ENCODE measurements at regions of chr17 and their contacts with region 1.

Region 1: DNA sequence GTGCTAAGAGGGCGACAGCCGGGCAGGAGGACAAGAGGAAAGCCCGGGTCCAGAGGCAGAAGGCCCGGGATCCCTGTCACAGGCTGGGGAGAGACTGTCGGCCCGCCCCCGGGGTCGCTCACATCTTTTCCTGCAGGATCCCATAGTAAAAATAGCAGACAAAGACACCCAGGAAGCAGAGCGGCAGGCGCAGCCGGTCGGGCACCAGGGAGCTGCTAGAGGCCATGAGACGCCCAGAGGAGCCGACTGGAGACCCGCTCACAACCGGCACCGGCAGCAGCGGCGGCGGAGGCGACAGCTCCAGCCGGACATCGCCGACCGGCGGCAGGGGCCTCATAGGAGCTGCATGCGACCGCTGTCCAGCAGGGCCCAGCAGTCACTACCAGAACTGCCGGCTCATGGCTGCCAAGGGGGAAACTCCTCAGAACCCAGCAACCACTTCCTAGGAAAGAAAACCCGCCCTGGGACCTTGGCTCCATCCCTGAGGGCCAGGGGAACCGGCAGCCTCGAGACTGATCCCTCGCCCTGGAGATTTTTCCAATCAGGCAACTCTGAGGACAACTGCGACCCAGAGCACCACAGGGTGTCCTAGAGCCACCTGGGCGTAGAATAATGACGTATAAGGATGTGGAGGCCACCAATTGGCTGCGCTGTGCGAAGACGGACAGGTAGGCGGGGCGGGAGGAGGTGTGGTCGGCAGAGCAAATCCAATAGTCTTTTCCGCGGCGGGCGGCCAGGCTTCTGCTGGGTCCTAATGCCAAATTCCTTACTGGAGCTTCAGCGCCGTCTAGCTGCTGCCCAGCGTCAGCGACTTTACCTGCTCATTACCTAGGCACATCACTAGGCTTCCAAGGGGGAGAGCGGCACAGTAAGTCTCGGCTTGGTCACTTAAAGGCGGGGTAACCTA is at the start of gene SLC35B1:
- DNase-seq: peak; percentile 99
- H3K4me3 ChIP-seq: peak within 1 kb of the TSS; percentile 96
- H3K27ac ChIP-seq: peak within 1 kb of the TSS; percentile 53
- H3K4me1 ChIP-seq: peaks cover 19% of the 10 kb centered on the region
- CTCF ChIP-seq: peak; percentile 97
- total RNA-seq, gene SLC35B1: 38.1 and 51.2 TPM in 2 replicates

Region 2: DNA sequence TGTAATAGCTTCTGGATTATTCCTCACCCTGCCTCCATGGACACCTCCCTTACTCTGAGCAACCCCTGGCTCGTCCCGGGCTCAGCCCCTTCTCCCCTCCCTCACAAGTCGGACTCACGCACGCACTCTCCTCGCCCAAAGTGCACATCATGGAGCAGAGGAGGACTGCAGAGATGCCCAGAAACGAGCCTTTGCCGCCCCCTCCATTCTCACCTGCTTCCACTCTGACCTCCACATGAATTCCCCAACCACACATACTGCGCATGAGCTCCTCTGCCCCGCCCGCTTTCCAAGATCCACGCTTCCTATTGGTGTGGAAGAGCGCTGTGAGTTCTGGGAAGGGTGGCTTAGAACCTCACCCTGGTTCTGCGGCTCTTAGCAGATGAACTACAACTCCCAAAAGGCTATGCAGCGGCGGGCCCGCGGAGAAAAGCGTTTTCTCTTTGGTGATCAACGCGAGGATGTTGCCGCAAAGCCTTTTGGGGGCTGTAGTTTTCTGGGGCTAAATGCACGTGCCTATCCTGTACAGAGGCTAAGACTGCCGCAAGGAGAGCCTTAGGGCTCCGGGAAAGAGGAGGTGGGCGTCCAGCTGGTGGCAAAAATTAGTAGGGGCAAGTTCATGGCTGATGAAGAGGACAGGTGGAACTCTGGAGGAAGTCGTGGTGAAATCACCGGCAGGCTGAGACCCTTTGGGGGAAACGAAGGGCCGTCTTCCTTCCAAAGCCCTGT is 293.1 kb before region 1 on chr17 and contains the start of gene PHB1:
- CTCF ChIA-PET with region 1: no interaction called
- POLR2A ChIA-PET with region 1: no interaction called
- intact Hi-C with region 1: loop called (anchors 10 kb)
- DNase-seq: peak; percentile 98
- H3K4me3 ChIP-seq: peak within 1 kb of the TSS; percentile 96
- H3K27ac ChIP-seq: no peak within 1 kb of the TSS
- H3K4me1 ChIP-seq: peaks cover 16% of the 10 kb centered on the region
- CTCF ChIP-seq: no peak
- total RNA-seq, gene PHB1: 131 and 137 TPM in 2 replicates

Region 3: GRCh38 chr17:49748791-49749190 is 40.9 kb after region 1 on chr17:
- CTCF ChIA-PET with region 1: interaction called, 3 read pairs
- POLR2A ChIA-PET with region 1: interaction called, 11 read pairs
- intact Hi-C with region 1: loop called (anchors 1 kb)
- DNase-seq: peak; percentile 90
- H3K4me3 ChIP-seq: peak overlapping the region; percentile 67
- H3K27ac ChIP-seq: peak overlapping the region; percentile 94
- H3K4me1 ChIP-seq: peaks cover 93% of the 10 kb centered on the region
- CTCF ChIP-seq: no peak

Region 4: DNA sequence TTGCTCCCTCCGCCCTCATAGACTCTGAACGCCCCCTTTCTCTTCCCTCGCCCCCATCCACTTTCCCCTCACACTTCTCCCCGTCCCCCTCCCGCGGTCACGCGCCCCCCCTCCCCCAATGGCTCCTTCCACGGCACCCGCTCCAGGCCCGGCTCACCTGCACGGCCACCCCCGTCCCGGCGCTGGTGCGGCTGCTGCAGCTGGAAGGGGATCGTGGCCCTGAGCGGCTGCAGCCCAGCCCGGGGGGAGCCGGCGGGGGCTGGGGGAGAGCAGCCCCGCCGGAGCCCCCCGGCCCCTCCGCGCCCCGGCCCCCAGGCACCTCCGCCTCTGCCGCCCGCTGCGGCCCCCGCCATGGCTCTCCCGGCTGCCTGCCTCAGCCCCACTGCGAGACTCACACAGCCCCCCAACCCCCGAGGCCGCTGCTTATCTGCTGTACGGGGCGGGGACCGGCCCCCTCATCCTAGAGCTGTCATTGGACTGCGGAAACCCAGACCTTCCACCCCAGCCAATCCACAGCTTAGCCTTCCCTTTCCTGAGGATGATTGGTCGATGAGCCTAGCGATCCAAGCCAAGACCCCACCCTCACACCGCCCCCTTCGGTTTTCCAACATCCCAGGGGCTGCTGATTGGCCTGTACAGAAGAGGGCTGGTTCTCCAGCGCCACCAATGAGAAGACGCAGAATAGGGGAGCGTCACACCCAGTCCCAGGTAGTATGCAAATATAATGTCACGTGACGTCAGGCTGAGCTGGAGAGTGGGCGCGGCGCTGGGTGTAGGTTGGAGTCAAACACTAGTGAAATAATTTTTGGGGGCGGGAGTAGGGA is 56.1 kb after region 1 on chr17 and contains the start of gene FAM117A:
- CTCF ChIA-PET with region 1: no interaction called
- POLR2A ChIA-PET with region 1: interaction called, 3 read pairs
- intact Hi-C with region 1: loop called (anchors 1 kb)
- DNase-seq: peak; percentile 99
- H3K4me3 ChIP-seq: peak within 1 kb of the TSS; percentile 87
- H3K27ac ChIP-seq: peak within 1 kb of the TSS; percentile 79
- H3K4me1 ChIP-seq: peaks cover 41% of the 10 kb centered on the region
- CTCF ChIP-seq: no peak
- total RNA-seq, gene FAM117A: 29.9 and 40.4 TPM in 2 replicates

Region 5: GRCh38 chr17:49788478-49789242 is 80.8 kb after region 1 on chr17 and contains the start of gene KAT7:
- CTCF ChIA-PET with region 1: no interaction called
- POLR2A ChIA-PET with region 1: interaction called, 3 read pairs
- intact Hi-C with region 1: loop called (anchors 1 kb)
- DNase-seq: peak; percentile 100
- H3K4me3 ChIP-seq: peak within 1 kb of the TSS; percentile 88
- H3K27ac ChIP-seq: peak within 1 kb of the TSS; percentile 86
- H3K4me1 ChIP-seq: peaks cover 25% of the 10 kb centered on the region
- CTCF ChIP-seq: no peak
- total RNA-seq, gene KAT7: 41.0 and 43.3 TPM in 2 replicates

Region 6: DNA sequence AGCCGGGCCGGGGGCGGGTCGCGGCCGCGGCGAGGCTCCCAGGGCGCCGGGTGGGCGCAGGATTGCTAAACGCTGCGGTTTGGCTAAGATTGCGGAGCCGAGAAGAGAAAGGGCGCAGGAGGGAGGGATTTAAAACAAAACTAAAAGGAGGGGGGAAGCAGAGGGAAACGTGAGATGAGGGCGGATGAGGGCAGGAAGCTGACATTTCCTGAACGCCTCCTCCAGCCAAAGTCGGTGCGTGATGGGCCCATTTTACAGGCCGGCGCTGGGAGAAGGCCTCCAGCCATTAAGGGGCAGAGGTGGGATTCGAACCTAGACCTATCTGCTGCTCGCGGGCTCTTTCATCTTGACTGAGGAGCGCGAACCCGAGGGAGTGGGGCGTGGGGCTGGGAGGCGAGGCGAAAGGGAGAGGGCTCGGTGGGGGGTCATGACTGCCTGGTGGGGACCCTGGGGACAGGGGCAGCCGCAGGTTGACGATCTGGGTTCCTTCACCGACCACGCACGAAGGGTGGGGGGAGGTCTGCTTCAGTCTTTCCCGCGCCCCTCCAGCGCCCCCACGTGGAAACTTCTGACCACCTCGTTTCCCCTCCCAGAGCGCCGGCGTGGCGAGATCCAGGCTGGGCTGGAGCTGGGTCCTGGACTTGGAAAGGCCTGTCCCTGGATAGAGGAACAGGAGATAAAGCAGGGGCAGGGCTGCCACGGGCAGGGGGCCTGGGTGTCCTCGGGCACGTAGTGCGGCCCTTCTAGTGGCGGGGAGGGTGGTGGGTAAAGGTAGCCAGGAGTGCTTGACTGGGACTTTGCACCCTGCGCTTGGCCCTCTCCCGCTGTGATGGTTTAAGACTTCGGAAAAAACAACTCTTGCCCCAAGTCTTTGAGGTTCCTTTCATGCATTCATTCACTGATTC is 143.8 kb after region 1 on chr17:
- CTCF ChIA-PET with region 1: no interaction called
- POLR2A ChIA-PET with region 1: no interaction called
- intact Hi-C with region 1: loop called (anchors 5 kb)
- DNase-seq: peak; percentile 54
- H3K4me3 ChIP-seq: peak overlapping the region; percentile 49
- H3K27ac ChIP-seq: no peak overlapping the region
- H3K4me1 ChIP-seq: peaks cover 6% of the 10 kb centered on the region
- CTCF ChIP-seq: peak; percentile 77

Region 7: DNA sequence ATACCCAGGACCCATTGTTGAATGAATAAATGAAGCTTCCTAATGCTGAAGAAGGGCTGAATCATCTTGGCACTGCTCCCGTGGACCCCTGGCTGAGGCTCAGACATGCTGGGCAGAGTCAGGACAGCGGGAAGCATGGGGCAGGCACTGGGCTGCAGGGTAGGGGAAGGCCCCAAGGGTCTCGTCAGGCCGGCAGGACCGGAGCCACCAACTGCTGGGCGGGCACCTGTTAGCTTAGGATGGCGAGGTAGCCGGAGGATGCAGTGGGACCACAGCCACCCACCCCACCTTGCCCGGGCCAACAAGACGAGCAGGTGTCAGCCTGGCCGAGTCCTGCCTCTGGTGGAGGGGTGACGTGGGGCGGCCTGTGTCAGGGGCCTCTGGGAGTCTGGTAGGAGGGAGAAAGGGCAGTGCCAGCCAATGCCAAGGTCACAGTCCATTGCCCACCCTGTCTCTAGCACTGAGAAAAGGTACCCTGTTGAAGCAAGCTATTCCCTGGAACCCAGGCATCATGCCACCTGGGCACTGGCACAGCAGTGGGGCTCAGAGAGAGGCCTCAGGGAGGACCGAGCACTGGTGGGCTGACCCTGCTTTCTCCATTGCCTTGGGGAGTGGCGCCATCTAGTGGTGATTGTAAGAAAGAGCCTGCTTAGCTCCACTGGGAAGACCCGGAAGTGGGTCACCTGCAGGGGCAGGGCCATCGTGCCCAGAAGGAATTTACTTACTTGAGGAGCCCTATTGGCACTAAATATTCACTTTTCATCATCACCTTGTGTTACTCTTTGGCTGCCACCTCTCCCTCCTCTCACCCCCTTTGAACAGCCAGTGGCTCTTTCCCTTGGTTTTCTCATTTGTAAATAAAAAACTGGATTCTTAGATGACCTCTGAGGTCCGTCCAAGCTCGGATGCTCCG is 290.2 kb after region 1 on chr17:
- CTCF ChIA-PET with region 1: no interaction called
- POLR2A ChIA-PET with region 1: no interaction called
- intact Hi-C with region 1: loop called (anchors 5 kb)
- DNase-seq: peak; percentile 91
- H3K4me3 ChIP-seq: no peak overlapping the region
- H3K27ac ChIP-seq: no peak overlapping the region
- H3K4me1 ChIP-seq: peaks cover 5% of the 10 kb centered on the region
- CTCF ChIP-seq: peak; percentile 92

Measured in OCI-LY7 (cell line).